CD8-positive, alpha-beta memory T cell (primary cell): ENCODE measurements at regions of chr4 and their contacts with region 1.

Region 1: GRCh38 chr4:15779309-15779708 is 1.2 kb downstream of the CD38 start:
- DNase-seq: no peak
- H3K4me3 ChIP-seq: peak overlapping the region; percentile 58
- H3K4me3 Mint-ChIP-seq: peak overlapping the region; percentile 75 to 92 (median 84)
- H3K27ac ChIP-seq: no peak overlapping the region
- H3K27ac Mint-ChIP-seq: peak overlapping the region in 5 of 8 donors; percentile 3 to 83 (median 25)
- H3K4me1 ChIP-seq: peaks cover 38% of the 10 kb centered on the region
- H3K4me1 Mint-ChIP-seq: peaks cover 34 to 57% (median 39%) of the 10 kb centered on the region in 3 donors
- H3K27me3 ChIP-seq: no peaks in the 10 kb centered on the region
- H3K27me3 Mint-ChIP-seq: peaks cover 5 to 7% of the 10 kb centered on the region in 2 donors

Region 2: DNA sequence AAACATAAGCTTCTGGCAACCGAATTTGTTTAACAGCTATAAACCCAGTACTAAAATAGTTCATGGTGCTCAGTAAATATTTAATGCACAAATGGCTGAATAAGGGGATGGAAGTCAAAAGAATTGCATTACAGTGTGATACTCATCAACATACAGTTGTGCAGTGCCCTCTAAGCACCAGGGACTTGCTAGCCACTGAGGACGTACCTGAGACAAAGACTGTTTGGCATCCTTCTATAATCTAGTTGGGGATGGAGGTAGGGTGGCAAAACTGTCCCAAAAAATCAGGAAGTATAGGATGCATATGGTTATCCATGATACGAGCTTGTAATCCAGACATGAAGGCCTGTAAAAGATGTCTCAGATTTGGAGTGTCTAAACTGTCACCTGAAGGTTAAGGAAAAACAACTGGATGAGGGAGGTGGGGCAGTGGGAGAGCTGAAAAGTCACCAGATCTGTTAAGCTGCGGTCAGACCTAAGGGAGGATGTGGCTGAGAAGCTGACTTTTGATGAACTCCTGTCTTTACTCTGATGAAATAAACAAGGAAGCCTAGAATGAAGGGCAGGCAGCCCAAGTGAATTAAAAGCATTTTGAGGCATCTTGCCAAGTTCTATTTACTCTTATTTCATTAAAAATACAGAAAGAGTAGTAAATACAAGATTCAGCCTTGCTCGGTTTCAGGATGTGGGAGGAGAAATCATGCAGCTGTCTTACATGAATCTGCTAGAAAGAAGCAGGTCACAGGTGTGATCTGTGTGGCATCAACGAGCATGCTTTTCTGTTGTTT is 13.2 kb before region 1 on chr4:
- CTCF ChIA-PET with region 1: interaction called, 3 read pairs
- POLR2A ChIA-PET with region 1: interaction called, 12 read pairs
- DNase-seq: peak in 4 of 5 donors; percentile 33 to 74 (median 64)
- H3K4me3 ChIP-seq: no peak overlapping the region
- H3K4me3 Mint-ChIP-seq: peak overlapping the region; percentile 4 to 76 (median 30)
- H3K27ac ChIP-seq: no peak overlapping the region
- H3K27ac Mint-ChIP-seq: peak overlapping the region; percentile 36 to 79 (median 62)
- H3K4me1 ChIP-seq: peaks cover 42% of the 10 kb centered on the region
- H3K4me1 Mint-ChIP-seq: peaks cover 28 to 40% (median 37%) of the 10 kb centered on the region in 3 donors
- H3K27me3 ChIP-seq: no peaks in the 10 kb centered on the region
- H3K27me3 Mint-ChIP-seq: peaks cover 0 to 6% of the 10 kb centered on the region in 2 donors

Region 3: GRCh38 chr4:15805583-15806517 is 26.5 kb after region 1 on chr4:
- CTCF ChIA-PET with region 1: interaction called, 12 read pairs
- POLR2A ChIA-PET with region 1: no interaction called
- DNase-seq: peak in 3 of 5 donors; percentile 35 to 54 (median 47)
- H3K4me3 ChIP-seq: no peak overlapping the region
- H3K4me3 Mint-ChIP-seq: no peak overlapping the region
- H3K27ac ChIP-seq: no peak overlapping the region
- H3K27ac Mint-ChIP-seq: no peak overlapping the region
- H3K4me1 ChIP-seq: no peaks in the 10 kb centered on the region
- H3K4me1 Mint-ChIP-seq: peaks cover 12 to 25% (median 16%) of the 10 kb centered on the region in 3 donors
- H3K27me3 ChIP-seq: no peaks in the 10 kb centered on the region
- H3K27me3 Mint-ChIP-seq: no peaks in the 10 kb centered on the region